ENCODE measurements at regions of chr13 and their contacts with region 1.

Region 1: GRCh38 chr13:94674609-94675348 is 37.6 kb downstream of the SOX21 start:
- DNase-seq: no peak
- ATAC-seq: no peak
- H3K4me3 ChIP-seq: no peak overlapping the region
- H3K27ac ChIP-seq: no peak overlapping the region
- H3K4me1 ChIP-seq: no peaks in the 10 kb centered on the region
- H3K27me3 ChIP-seq: peaks cover 0 to 6% (median 4%) of the 10 kb centered on the region in 3 donors
- CTCF ChIP-seq: peak; percentile 56

Region 2: GRCh38 chr13:94710881-94711560 is 36.2 kb after region 1 on chr13:
- intact Hi-C with region 1: no loop called
- DNase-seq: no peak
- ATAC-seq: no peak
- H3K4me3 ChIP-seq: peak overlapping the region; percentile 58
- H3K27ac ChIP-seq: no peak overlapping the region
- H3K4me1 ChIP-seq: peaks cover 9% of the 10 kb centered on the region
- H3K27me3 ChIP-seq: peaks cover 0 to 91% (median 42%) of the 10 kb centered on the region in 3 donors
- CTCF ChIP-seq: no peak

Region 3: DNA sequence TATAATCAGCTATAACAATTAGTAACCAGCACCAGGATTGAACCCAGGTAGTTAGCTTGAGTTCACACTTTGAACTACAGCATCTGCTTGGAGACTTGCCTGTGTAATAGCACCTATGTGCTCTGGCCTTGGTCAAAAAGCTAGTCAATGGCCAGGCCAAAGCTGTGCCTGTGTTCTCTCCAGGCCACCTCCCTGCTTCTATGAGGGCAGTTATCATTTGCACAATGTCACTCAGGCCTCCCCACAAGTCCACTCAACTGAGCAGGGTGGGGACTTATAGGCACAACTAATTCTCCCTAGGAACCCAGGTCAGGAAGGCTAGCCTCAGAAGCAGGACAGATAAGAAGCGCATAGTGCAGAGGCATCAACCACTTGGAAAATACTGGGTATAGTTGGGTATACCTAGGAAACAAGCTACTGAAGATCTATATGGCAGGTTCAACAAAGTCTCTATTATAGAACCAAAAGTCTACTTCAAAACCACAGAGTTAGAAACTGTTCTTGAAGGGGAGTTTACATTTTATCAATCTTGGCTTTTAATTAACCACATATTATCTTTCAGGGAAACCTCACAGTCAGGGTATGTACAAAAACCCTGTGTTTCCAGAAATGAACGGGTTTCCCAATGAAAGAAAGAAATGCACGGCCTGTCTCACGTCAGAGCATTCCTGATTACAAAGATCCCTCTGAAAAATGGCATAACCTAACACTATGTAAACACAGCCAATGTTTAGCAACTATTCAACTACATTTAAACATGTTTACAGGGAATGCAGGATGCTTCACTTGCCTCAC is 485.5 kb after region 1 on chr13:
- intact Hi-C with region 1: loop called in 1 of 2 experiments (anchors 10 kb)
- DNase-seq: no peak
- ATAC-seq: no peak
- H3K4me3 ChIP-seq: no peak overlapping the region
- H3K27ac ChIP-seq: no peak overlapping the region
- H3K4me1 ChIP-seq: no peaks in the 10 kb centered on the region
- H3K27me3 ChIP-seq: no peaks in the 10 kb centered on the region
- CTCF ChIP-seq: no peak

Region 4: DNA sequence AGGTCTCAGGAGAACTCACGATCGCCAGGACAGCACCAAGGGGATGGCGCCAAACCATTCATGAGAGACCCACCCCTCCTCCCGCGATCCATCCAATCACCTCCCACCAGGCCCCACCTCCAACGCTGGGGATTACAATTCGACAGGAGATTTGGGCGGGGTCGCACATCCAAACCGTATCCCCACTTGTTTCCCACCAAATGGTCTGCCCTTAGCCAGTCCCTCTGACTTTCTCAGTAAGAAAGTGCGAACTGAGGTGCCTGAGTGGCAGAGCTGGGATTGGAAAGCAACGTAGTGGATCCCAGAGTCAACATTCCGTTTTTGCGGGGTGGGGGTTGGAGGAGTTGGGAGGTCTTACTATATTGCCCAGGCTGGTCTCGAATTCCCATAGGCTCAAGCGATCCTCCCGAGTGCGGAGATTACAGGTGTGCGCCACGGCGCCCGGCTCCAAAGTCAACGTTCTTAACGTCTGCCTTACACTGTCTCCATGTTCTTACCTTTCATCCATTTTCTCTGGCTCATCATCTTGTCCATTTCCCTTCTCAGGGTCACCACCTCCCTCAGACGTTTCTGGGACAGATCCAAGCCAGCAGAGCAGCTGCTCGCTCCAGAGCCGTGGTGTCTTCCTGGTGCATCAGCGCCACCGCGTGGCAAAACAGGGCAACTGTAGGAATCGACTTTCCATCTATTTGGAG is 729.2 kb after region 1 on chr13:
- intact Hi-C with region 1: loop called (anchors 5 to 10 kb)
- DNase-seq: peak; percentile 76 to 90
- ATAC-seq: peak; percentile 88 to 98 (median 92)
- H3K4me3 ChIP-seq: peak overlapping the region; percentile 57
- H3K27ac ChIP-seq: no peak overlapping the region
- H3K4me1 ChIP-seq: no peaks in the 10 kb centered on the region
- H3K27me3 ChIP-seq: no peaks in the 10 kb centered on the region
- CTCF ChIP-seq: peak; percentile 95

Region 5: DNA sequence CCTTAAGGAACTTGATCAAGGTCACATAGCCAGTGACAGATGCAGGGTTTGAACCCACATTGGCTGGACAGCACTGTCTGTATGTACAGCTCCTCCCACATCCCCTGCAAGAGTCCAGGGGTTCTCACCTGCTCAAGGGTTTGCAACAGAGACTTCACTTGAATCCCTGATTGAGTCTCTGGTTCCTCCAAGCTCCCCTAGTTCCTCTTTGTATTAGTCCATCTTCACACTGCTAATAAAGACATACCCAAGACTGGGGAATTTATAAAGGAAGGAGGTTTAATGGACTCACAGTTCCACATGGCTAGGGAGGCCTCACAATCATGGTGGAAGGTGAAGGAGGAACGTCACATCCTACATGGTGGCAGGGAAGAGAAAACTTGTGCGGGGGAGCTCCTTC is 805.0 kb after region 1 on chr13:
- intact Hi-C with region 1: loop called in 1 of 2 experiments (anchors 5 kb)
- DNase-seq: no peak
- ATAC-seq: no peak
- H3K4me3 ChIP-seq: no peak overlapping the region
- H3K27ac ChIP-seq: no peak overlapping the region
- H3K4me1 ChIP-seq: no peaks in the 10 kb centered on the region
- H3K27me3 ChIP-seq: no peaks in the 10 kb centered on the region
- CTCF ChIP-seq: no peak